Motor neuron (in vitro differentiated cells): ENCODE measurements at regions of chr9 and their contacts with region 1.

Region 1: GRCh38 chr9:94980947-94981722 is 254.6 kb downstream of the AOPEP start:
- ATAC-seq: peak in 1 of 8 experiments; percentile 77
- H3K4me3 ChIP-seq: no peak overlapping the region
- H3K27ac ChIP-seq: no peak overlapping the region
- H3K4me1 ChIP-seq: no peaks in the 10 kb centered on the region

Region 2: GRCh38 chr9:94894111-94894699 is 86.9 kb before region 1 on chr9:
- in situ Hi-C with region 1: no loop called
- ATAC-seq: no peak
- H3K4me3 ChIP-seq: no peak overlapping the region
- H3K27ac ChIP-seq: no peak overlapping the region
- H3K4me1 ChIP-seq: no peaks in the 10 kb centered on the region

Region 3: GRCh38 chr9:95092262-95093072 is 111.3 kb after region 1 on chr9:
- in situ Hi-C with region 1: loop called in 1 of 9 experiments (anchors 25 kb)
- ATAC-seq: peak; percentile 62 to 83 (median 72)
- H3K4me3 ChIP-seq: no peak overlapping the region
- H3K27ac ChIP-seq: peak overlapping the region in 1 of 2 donors; percentile 51
- H3K4me1 ChIP-seq: peaks cover 31 to 33% of the 10 kb centered on the region in 2 donors

Region 4: DNA sequence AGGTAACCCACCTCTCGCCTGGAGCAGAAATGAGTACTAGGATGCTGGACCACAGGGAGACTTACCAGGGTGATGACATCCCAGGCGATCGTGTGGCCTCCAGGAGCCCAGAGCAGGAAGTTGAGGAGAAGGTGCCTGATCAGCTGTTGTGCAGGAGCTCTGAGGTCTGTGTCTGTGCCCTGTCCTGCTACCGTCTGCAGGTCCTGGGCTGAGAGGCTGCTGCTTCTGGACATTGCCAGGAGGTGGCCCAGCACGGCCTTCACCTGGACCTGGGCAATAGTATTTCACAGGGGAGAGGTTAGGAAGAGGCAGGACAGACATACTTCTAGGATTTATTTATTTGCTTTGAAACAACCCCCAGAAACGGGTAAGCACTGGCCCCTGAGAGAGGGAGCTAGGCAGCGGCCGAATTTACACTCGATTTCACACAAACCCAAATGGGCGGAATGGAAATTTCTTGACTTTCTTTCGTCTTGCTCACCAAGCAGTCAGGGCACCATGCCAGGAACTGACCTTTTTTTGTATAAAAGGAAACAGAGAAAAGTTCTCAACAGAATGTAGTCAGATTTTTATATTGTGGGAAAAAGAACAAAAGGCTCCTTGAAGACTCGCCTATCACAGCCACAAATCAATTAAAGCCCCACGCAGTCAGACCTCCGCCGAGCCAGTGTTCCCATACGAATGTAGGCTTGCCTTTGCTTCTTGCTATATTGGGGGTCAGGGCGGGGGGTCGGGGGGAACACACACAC is 126.0 kb after region 1 on chr9:
- in situ Hi-C with region 1: no loop called
- ATAC-seq: peak in 3 of 8 experiments; percentile 24 to 35 (median 31)
- H3K4me3 ChIP-seq: no peak overlapping the region
- H3K27ac ChIP-seq: no peak overlapping the region
- H3K4me1 ChIP-seq: peaks cover 4 to 7% of the 10 kb centered on the region in 2 donors